Activated naive CD4-positive, alpha-beta T cell treated with anti-CD3 and anti-CD28 coated beads, Interleukin-2, amount 10 ng/mL, durations not matched to agents 7 days and 5 days (primary cell): ENCODE measurements at regions of chr6 and their contacts with region 1.

Region 1: DNA sequence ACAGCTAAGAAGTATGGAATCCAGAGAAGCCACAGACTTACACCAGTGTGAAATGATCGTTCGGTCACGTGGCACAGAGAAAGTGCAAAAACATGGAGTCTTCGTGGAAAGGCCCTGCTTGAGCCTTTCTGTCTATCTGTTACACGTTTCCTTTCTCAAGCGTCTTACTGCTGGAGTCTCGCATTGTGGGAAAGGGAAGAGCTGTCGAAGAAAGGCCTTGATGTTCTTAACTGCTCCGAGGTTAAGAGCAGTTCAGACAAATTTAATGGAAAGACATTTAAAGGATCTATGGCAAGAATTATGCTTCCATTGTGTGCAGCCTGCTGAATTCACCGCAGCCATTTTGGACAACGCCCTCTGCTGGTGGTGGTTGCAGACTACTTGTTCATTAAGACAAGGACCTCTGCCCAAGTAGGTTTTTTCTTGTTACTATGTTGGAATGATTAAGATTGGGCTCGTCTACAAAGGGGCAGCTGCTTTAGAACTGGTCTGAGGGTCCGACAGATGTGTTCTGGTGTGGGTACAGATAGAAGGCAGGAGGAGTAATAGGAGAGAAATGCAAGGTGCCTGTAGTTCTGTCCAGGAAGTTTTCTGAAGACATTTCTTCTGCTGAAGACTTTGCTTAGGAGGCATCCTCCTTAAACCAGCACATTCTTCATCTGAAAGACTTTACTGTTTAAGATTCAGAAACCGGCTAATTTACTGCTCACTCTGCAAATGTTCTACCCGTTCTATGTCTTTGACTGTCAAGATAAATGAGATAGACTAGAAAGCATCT is 24.7 kb upstream of the CCN6 start:
- DNase-seq: peak; percentile 72
- H3K4me3 Mint-ChIP-seq: no peak overlapping the region
- H3K27ac Mint-ChIP-seq: peak overlapping the region; percentile 98
- H3K4me1 Mint-ChIP-seq: peaks cover 64% of the 10 kb centered on the region
- H3K27me3 Mint-ChIP-seq: no peaks in the 10 kb centered on the region

Region 2: GRCh38 chr6:111911428-111911827 is 117.8 kb before region 1 on chr6:
- CTCF ChIA-PET with region 1: no interaction called
- DNase-seq: no peak
- H3K4me3 Mint-ChIP-seq: no peak overlapping the region
- H3K27ac Mint-ChIP-seq: no peak overlapping the region
- H3K4me1 Mint-ChIP-seq: no peaks in the 10 kb centered on the region
- H3K27me3 Mint-ChIP-seq: peaks cover 6% of the 10 kb centered on the region

Region 3: GRCh38 chr6:111950661-111951496 is 78.4 kb before region 1 on chr6:
- CTCF ChIA-PET with region 1: no interaction called
- DNase-seq: no peak
- H3K4me3 Mint-ChIP-seq: no peak overlapping the region
- H3K27ac Mint-ChIP-seq: no peak overlapping the region
- H3K4me1 Mint-ChIP-seq: peaks cover 2% of the 10 kb centered on the region
- H3K27me3 Mint-ChIP-seq: peaks cover 29% of the 10 kb centered on the region

Region 4: DNA sequence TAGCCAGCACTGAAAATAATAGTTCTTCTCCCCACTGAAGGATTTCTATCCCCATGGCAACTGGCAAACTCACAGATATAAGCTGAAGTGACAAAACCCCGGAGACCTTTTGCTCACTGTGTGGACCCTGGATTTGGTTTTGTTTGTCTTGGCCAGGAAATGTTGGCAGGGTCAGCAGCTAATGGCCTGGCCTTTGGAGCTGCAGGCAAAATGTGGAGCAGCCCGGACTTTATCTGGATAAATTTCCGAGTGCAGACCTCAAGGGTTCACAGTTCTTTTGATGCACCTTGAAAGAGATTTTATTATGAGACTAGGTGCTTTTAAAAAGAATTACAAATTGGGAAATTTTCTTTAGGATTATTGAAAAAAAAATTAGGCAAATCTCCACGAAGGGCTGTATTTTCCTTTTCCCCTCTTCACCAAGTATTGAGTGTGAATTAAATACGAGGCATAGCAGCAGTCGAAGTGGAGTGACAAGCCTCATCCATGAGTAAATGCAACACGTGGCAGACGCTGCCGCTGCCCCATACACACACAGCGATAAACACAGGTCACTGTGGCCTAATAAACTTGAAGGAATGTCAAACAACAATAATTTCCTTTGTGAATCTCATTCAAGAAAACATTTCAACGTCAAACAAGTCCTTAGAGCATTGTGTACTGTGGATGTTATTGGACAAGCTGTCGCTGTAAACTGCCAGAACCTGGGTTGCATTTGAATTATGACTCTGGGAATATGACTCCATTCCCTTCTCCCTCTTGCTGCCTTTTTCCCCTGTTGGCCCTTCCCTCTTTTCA is 10.4 kb before region 1 on chr6:
- CTCF ChIA-PET with region 1: interaction called, 40 read pairs
- DNase-seq: no peak
- H3K4me3 Mint-ChIP-seq: no peak overlapping the region
- H3K27ac Mint-ChIP-seq: no peak overlapping the region
- H3K4me1 Mint-ChIP-seq: peaks cover 31% of the 10 kb centered on the region
- H3K27me3 Mint-ChIP-seq: no peaks in the 10 kb centered on the region